Activated T-helper 1 cell treated with anti-CD3 and anti-CD28 coated beads, Interleukin-12 subunit alpha, Interleukin-12 subunit beta, Interleukin-2, Interleukin-4 antibody, amounts not matched to agents 30 ng/mL and 10 ng/mL and 1 ng/mL, durations not matched to agents 14 hours and 24 hours and 36 hours (primary cell): ENCODE measurements at regions of chr18 and their contacts with region 1.

Region 1: GRCh38 chr18:75070625-75071483 is 138.1 kb downstream of the PTGR3 start:
- DNase-seq: peak; percentile 70
- H3K4me3 Mint-ChIP-seq: peak overlapping the region; percentile 78
- H3K27ac Mint-ChIP-seq: peak overlapping the region; percentile 96
- H3K4me1 Mint-ChIP-seq: peaks cover 31% of the 10 kb centered on the region
- H3K27me3 Mint-ChIP-seq: no peaks in the 10 kb centered on the region

Region 2: DNA sequence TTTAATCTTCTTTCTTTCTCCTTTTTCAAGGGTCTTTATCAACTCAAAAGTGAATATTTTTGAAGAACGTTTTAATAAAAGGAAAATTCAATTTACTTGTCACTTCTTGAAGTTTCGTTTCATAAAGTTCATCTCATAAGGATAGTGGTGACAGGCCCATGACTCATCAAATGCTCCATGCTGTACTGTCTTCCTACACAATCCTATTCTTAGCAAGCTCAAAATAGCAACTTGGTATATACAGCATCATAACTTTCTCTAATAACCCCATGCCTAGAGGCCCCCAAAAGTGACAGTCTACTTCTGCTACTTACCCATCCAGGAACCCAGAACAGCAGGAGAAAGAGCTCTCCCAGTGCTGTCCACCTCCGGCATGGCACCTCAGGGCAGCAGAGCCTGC is 931.0 kb before region 1 on chr18:
- intact Hi-C with region 1: loop called (anchors 1 kb)
- DNase-seq: no peak
- H3K4me3 Mint-ChIP-seq: peak overlapping the region; percentile 59
- H3K27ac Mint-ChIP-seq: peak overlapping the region; percentile 93
- H3K4me1 Mint-ChIP-seq: peaks cover 44% of the 10 kb centered on the region
- H3K27me3 Mint-ChIP-seq: peaks cover 5% of the 10 kb centered on the region

Region 3: DNA sequence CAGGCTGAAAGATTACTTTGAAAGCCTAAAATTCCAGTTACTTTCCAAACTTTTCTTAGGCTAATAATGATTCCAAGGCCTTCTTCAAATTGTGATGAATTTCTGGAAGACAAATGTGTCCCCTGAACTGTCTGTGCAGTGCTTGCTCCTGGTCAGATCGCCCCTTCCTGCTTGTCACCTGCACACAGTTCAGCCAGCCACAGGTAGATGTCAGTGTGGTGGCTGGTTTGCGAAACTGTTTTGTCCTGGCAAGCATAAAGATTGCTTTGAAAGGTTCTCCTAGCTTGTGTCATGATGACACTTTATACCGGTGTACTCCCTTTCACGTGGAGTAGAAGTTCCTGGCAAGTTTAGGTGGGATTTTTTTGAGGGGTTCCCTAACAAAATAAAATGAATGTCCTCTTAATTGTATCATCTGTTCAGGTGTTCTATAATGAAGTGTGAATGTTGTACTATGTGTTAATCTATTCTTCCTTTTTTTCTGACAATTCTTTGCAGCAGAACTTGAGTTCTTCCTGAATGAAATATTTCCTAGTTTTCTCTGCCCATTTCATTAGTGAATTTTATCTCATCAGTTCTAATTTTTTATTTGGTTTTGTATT is 174.4 kb before region 1 on chr18:
- intact Hi-C with region 1: loop called (anchors 5 kb)
- DNase-seq: peak; percentile 20
- H3K4me3 Mint-ChIP-seq: no peak overlapping the region
- H3K27ac Mint-ChIP-seq: no peak overlapping the region
- H3K4me1 Mint-ChIP-seq: peaks cover 27% of the 10 kb centered on the region
- H3K27me3 Mint-ChIP-seq: no peaks in the 10 kb centered on the region

Region 4: DNA sequence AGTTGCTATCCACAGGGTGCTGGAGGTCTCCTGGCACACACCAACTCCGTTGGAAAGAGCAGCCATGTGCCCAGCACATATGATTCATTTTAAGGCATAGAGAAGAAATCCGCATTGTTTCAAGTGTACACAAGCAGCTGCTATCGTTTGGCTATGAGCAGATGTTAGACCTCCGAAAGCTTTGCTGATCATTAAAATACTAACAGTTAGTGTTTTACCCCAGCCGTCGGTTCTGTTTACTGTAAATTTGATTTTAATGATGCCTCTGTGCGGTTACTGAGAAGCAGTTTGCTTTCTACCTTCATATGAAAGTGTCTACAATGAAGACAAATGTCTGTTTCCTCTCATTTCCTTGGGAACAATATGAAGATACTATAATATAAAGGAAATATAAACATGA is 16.8 kb before region 1 on chr18:
- intact Hi-C with region 1: loop called (anchors 1 kb)
- DNase-seq: no peak
- H3K4me3 Mint-ChIP-seq: no peak overlapping the region
- H3K27ac Mint-ChIP-seq: no peak overlapping the region
- H3K4me1 Mint-ChIP-seq: peaks cover 6% of the 10 kb centered on the region
- H3K27me3 Mint-ChIP-seq: no peaks in the 10 kb centered on the region

Region 5: GRCh38 chr18:75231053-75231406 is 160.2 kb after region 1 on chr18:
- intact Hi-C with region 1: no loop called
- DNase-seq: no peak
- H3K4me3 Mint-ChIP-seq: no peak overlapping the region
- H3K27ac Mint-ChIP-seq: no peak overlapping the region
- H3K4me1 Mint-ChIP-seq: peaks cover 26% of the 10 kb centered on the region
- H3K27me3 Mint-ChIP-seq: no peaks in the 10 kb centered on the region

Region 6: GRCh38 chr18:76374330-76375281 is 1303.8 kb after region 1 on chr18:
- intact Hi-C with region 1: loop called (anchors 10 kb)
- DNase-seq: peak; percentile 50
- H3K4me3 Mint-ChIP-seq: peak overlapping the region; percentile 8
- H3K27ac Mint-ChIP-seq: peak overlapping the region; percentile 70
- H3K4me1 Mint-ChIP-seq: peaks cover 40% of the 10 kb centered on the region
- H3K27me3 Mint-ChIP-seq: peaks cover 12% of the 10 kb centered on the region